B cell (primary cell): ENCODE measurements at regions of chr1 and their contacts with region 1.

Region 1: DNA sequence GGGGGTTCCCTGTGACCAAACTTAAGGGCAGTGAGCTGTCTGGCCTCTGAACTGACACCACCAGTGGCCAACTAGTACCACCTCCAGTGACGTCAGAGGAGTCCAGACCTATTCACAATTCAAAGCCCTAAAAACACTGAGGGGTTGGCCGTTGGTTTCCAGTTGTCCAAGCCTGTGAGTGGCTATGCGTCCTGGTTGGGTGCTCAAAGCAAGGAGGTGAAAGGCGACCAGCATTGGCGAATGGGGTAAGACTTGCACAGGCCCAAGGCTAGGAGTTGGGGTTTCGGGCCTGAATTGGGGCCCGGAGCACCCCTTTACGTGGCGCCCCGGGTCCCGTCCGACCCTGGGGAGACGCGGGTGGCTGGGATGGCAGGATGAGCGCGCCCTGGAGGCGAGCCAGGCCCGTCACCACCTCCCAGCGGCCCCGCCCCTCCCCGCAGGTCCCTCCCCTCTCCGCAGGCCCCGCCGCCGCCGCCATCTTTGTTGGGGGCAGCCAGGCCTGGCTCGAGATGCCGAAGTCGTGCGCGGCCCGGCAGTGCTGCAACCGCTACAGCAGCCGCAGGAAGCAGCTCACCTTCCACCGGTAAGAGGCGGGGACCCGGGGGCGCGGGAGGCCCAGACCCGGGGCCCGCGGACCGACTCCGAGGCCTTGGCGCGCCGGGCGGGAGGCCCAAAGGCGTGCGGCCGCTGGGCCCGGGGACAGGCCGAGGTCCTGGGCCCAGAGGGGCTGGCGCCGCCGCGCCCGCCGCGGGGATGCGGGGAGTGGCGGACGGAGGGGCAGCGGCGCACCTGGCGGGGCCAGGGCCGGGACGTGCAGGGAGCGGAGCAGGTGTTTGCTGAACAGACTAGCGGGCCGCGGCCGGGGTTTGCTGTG is at the start of gene THAP3:
- DNase-seq: peak; percentile 92
- ATAC-seq: peak; percentile 98
- H3K4me3 ChIP-seq: peak within 1 kb of the TSS; percentile 61 to 80 (median 62)
- H3K4me3 Mint-ChIP-seq: peak within 1 kb of the TSS; percentile 93
- H3K27ac ChIP-seq: peak within 1 kb of the TSS in 1 of 2 donors; percentile 27
- H3K27ac Mint-ChIP-seq: peak within 1 kb of the TSS; percentile 81
- H3K4me1 ChIP-seq: peaks cover 13 to 32% of the 10 kb centered on the region in 2 donors
- H3K4me1 Mint-ChIP-seq: peaks cover 31% of the 10 kb centered on the region
- H3K27me3 ChIP-seq: no peaks in the 10 kb centered on the region
- H3K27me3 Mint-ChIP-seq: no peaks in the 10 kb centered on the region
- CTCF ChIP-seq: peak; percentile 57
- total RNA-seq, gene THAP3: 24.6 and 30.4 TPM in 2 replicates

Region 2: GRCh38 chr1:6579374-6580118 is 45.4 kb before region 1 on chr1 and contains the start of gene ZBTB48:
- CTCF ChIA-PET with region 1: interaction called, 3 read pairs
- POLR2A ChIA-PET with region 1: no interaction called
- intact Hi-C with region 1: loop called (anchors 1 kb)
- DNase-seq: peak; percentile 97
- ATAC-seq: peak; percentile 97
- H3K4me3 ChIP-seq: peak within 1 kb of the TSS; percentile 30 to 91 (median 88)
- H3K4me3 Mint-ChIP-seq: peak within 1 kb of the TSS; percentile 98
- H3K27ac ChIP-seq: peak within 1 kb of the TSS; percentile 87 to 91
- H3K27ac Mint-ChIP-seq: peak within 1 kb of the TSS; percentile 98
- H3K4me1 ChIP-seq: peaks cover 20 to 32% of the 10 kb centered on the region in 2 donors
- H3K4me1 Mint-ChIP-seq: peaks cover 34% of the 10 kb centered on the region
- H3K27me3 ChIP-seq: no peaks in the 10 kb centered on the region
- H3K27me3 Mint-ChIP-seq: no peaks in the 10 kb centered on the region
- CTCF ChIP-seq: no peak
- total RNA-seq, gene ZBTB48: 65.6 and 79.0 TPM in 2 replicates

Region 3: DNA sequence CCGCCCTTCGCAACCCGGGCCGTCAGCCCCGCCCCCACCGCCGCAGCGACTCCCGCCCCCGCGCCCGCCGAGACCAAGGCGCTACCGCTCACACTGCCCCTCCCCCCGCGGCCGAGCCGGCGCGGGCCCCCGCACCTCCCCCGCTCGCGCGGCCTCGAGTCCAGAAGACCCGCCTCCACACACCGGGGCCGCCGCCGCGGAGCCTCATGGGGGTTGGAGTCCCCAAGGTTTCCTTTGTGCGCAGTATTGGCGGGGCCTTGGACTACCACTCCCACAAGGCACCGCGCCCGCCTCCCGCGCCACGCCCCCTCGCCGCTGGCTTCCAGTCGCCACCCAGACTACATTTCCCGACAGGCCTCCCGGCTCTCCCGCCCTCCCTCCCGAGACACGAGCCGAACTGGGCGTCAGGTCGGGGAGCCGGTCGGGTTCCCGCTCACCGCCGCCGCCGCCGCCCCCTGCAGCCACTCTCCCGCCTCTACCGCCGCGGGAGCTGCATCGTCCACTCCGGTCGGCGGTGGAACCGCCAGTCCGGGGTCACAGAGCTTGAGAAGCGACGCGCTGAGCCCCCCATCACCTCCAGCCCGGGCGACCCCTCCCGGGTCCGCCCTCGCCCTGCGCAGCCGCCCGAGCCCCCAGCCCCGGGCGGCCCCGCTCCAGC is 11.5 kb before region 1 on chr1 and contains the start of gene PHF13:
- CTCF ChIA-PET with region 1: interaction called, 3 read pairs
- POLR2A ChIA-PET with region 1: interaction called, 3 read pairs
- intact Hi-C with region 1: loop called (anchors 1 kb)
- DNase-seq: peak; percentile 99
- ATAC-seq: peak; percentile 93
- H3K4me3 ChIP-seq: peak within 1 kb of the TSS; percentile 64 to 94 (median 77)
- H3K4me3 Mint-ChIP-seq: peak within 1 kb of the TSS; percentile 92
- H3K27ac ChIP-seq: peak within 1 kb of the TSS; percentile 7 to 77
- H3K27ac Mint-ChIP-seq: peak within 1 kb of the TSS; percentile 91
- H3K4me1 ChIP-seq: peaks cover 11 to 14% of the 10 kb centered on the region in 2 donors
- H3K4me1 Mint-ChIP-seq: peaks cover 17% of the 10 kb centered on the region
- H3K27me3 ChIP-seq: no peaks in the 10 kb centered on the region
- H3K27me3 Mint-ChIP-seq: no peaks in the 10 kb centered on the region
- CTCF ChIP-seq: no peak
- total RNA-seq, gene PHF13: 10.6 and 11.0 TPM in 2 replicates